ENCODE measurements at regions of chr9 and their contacts with region 1.

Region 1: DNA sequence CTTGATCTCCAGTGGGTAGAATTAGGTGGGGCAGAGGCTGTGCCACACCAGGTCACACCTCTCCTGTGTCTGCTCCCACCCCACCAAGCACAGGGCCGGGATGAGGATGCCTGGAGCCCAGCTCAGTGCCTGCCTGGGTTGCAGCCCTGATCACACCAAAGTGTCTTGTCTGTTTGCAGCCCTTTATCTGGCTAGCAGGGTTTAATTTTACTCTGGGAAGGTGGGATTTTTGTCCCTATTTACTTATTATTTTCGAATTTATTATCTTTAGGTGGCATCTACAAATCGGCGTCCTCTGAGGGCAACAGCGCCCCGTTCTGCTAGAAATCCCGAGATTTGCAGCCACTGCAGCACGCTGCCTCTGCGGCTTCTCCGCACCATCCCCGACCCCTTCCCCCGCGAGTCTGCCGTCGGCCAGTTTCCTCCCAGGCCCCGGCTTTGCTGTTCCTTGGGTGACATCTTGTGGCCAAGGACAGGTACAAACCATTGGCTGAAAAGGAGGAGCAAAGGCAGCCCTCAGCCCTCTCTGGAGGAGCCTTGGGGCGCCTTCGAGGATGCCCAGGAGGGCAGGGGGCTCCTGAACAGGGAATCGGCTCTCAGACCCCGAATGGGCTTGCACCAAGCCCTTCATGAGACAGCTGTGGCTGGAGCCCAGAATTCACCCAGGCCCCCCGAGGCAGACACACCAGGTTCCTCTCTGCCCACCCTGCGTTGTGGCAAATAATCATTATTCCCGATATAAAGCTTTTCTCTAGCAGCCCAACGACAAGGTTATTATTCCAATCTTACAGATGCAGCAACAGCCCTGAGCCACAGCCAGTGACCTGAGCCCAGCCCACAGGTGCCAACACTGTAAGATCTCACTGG is 113.0 kb downstream of the GAPVD1 start:
- DNase-seq: peak; percentile 55 to 76 (median 66)
- ATAC-seq: peak; percentile 70 to 87 (median 84)
- H3K4me3 ChIP-seq: peak overlapping the region in 9 of 12 donors; percentile 26 to 50 (median 42)
- H3K27ac ChIP-seq: no peak overlapping the region
- H3K4me1 ChIP-seq: peaks cover 0 to 8% (median 2%) of the 10 kb centered on the region in 12 donors
- H3K27me3 ChIP-seq: peaks cover 0 to 4% (median 0%) of the 10 kb centered on the region in 9 donors
- CTCF ChIP-seq: peak; percentile 57 to 81 (median 70)
- POLR2A ChIP-seq: no peak

Region 2: GRCh38 chr9:124716808-124717207 is 657.9 kb before region 1 on chr9:
- intact Hi-C with region 1: loop called in 1 of 10 experiments (anchors 10 kb)
- DNase-seq: no peak
- ATAC-seq: no peak
- H3K4me3 ChIP-seq: no peak overlapping the region
- H3K27ac ChIP-seq: no peak overlapping the region
- H3K4me1 ChIP-seq: peaks cover 0 to 10% (median 0%) of the 10 kb centered on the region in 12 donors
- H3K27me3 ChIP-seq: no peaks in the 10 kb centered on the region
- CTCF ChIP-seq: no peak
- POLR2A ChIP-seq: no peak

Region 3: GRCh38 chr9:125255781-125256391 is 118.8 kb before region 1 on chr9:
- intact Hi-C with region 1: loop called in 7 of 10 experiments (anchors 1 to 10 kb)
- DNase-seq: no peak
- ATAC-seq: peak in 1 of 4 donors; percentile 57
- H3K4me3 ChIP-seq: no peak overlapping the region
- H3K27ac ChIP-seq: no peak overlapping the region
- H3K4me1 ChIP-seq: peaks cover 0 to 27% (median 0%) of the 10 kb centered on the region in 12 donors
- H3K27me3 ChIP-seq: peaks cover 0 to 4% (median 0%) of the 10 kb centered on the region in 9 donors
- CTCF ChIP-seq: peak in 7 of 12 donors; percentile 14 to 25 (median 23)
- POLR2A ChIP-seq: no peak

Region 4: DNA sequence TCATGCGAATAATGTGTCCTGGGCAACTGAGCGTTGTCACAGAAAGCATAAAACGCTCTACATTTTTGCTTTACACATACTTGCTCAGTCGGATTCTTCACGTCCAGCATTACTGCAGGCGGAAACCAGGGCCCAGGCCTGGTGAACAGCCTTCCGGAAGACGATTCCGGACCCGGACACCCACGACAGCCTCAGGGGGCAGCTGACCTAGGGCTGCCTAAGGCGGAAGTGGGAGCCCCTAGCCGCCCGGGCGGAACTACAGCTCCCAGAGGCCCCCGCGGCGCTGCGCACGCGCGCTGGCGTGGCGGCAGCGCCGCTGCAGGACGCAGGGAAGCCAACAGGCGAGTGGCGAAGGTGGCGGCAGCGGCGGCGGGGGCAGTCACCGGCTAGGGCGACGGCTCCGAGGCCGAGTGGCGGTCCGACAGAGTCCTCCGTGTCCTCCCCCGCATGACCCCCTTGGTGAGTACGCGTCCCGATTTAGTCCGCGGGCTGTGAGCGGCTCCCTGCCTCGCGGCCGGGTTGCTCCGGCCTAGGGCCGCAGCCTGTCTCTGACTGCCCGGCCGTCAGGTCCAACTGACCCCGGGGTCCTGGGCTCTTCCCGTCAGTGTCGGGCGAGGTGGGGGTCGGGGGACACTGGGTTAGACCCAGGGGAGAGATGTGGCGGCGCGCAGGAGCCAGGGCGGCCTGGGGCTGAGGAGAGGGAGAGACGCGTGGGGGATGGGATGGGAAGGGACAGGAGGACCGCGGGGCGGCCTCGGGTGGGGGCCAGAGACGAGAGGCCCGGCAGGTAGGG is 113.0 kb before region 1 on chr9 and contains the start of gene GAPVD1:
- intact Hi-C with region 1: loop called in 7 of 10 experiments (anchors 1 to 10 kb)
- DNase-seq: peak; percentile 88 to 95 (median 91)
- ATAC-seq: peak; percentile 96 to 99 (median 98)
- H3K4me3 ChIP-seq: peak within 1 kb of the TSS; percentile 66 to 100 (median 91)
- H3K27ac ChIP-seq: peak within 1 kb of the TSS; percentile 37 to 97 (median 85)
- H3K4me1 ChIP-seq: peaks cover 0 to 64% (median 20%) of the 10 kb centered on the region in 12 donors
- H3K27me3 ChIP-seq: peaks cover 0 to 4% (median 0%) of the 10 kb centered on the region in 9 donors
- CTCF ChIP-seq: peak in 10 of 12 donors; percentile 20 to 68 (median 50)
- POLR2A ChIP-seq: peak in 1 of 2 donors; percentile 74
- total RNA-seq, gene GAPVD1: 25.9 to 45.5 (median 32.7) TPM